ENCODE measurements at regions of chr11 and their contacts with region 1.

Region 1: GRCh38 chr11:28107748-28108618 is at the starts of genes KIF18A and METTL15:
- DNase-seq: peak; percentile 98 to 99
- ATAC-seq: peak; percentile 94 to 97
- H3K4me3 ChIP-seq: peak within 1 kb of the TSS; percentile 66 to 89 (median 79)
- H3K27ac ChIP-seq: peak within 1 kb of the TSS; percentile 79 to 90 (median 82)
- H3K4me1 ChIP-seq: peaks cover 19 to 34% of the 10 kb centered on the region in 2 donors
- H3K27me3 ChIP-seq: no peaks in the 10 kb centered on the region
- CTCF ChIP-seq: no peak
- POLR2A ChIP-seq: peak; percentile 38 to 56
- total RNA-seq, gene KIF18A: 0.10 to 0.41 (median 0.10) TPM
- total RNA-seq, gene METTL15: 4.5 to 15.5 (median 6.7) TPM

Region 2: DNA sequence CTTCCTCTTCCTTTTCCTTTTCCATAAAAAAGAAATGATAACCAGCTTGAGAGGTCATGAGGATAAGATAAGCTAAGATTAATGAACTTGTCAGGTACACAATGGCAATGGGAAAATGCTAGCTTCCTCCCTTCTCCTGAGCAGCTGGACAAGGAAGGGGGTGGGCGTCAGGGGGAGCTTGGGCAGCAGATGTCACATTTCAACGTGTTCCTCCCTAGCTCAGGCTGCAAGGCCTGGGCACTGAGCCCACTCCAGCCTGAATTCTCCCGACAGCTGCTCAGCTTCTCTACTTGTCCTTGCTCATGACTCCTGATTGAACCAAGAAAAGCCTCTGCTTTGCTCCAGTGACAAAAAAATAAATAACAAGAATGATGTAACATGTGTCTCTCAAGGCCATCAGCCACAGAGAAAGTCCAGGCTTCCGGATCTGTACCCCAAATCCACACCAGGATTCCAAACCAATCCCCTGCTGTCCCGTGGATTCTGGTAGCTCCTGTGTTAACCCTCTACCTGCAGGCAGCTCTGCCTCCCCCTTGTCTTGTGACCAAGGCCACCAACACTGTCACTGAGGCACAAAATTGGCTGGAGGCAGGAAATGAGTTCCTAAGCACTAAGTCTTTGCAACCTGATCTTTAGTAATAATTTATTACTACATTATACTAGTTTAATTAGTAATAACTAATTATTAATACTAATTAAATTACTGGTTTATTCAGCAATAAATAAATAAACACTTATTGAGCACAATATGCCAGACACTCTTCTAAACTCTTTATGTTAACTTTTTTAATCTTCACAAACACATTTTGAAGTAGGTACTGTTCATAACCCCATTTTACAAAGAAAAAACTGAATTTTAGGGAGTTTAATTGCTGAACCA is 891.5 kb before region 1 on chr11:
- in situ Hi-C with region 1: no loop called
- intact Hi-C with region 1: loop called (anchors 5 kb)
- DNase-seq: peak; percentile 42 to 50
- ATAC-seq: peak; percentile 76 to 78
- H3K4me3 ChIP-seq: peak overlapping the region in 1 of 4 donors; percentile 11
- H3K27ac ChIP-seq: peak overlapping the region; percentile 68 to 80 (median 70)
- H3K4me1 ChIP-seq: peaks cover 51 to 54% of the 10 kb centered on the region in 2 donors
- H3K27me3 ChIP-seq: no peaks in the 10 kb centered on the region
- CTCF ChIP-seq: no peak
- POLR2A ChIP-seq: no peak

Region 3: GRCh38 chr11:27506200-27507182 is 601.5 kb before region 1 on chr11 and contains the start of gene LIN7C:
- in situ Hi-C with region 1: loop called in 1 of 4 experiments (anchors 25 kb)
- intact Hi-C with region 1: loop called (anchors 1 kb)
- DNase-seq: peak; percentile 95 to 96
- ATAC-seq: peak; percentile 99
- H3K4me3 ChIP-seq: peak within 1 kb of the TSS; percentile 84 to 99 (median 94)
- H3K27ac ChIP-seq: peak within 1 kb of the TSS; percentile 93 to 97 (median 94)
- H3K4me1 ChIP-seq: peaks cover 32% of the 10 kb centered on the region in 2 donors
- H3K27me3 ChIP-seq: no peaks in the 10 kb centered on the region
- CTCF ChIP-seq: no peak
- POLR2A ChIP-seq: peak; percentile 87 to 88
- total RNA-seq, gene LIN7C: 10.6 to 22.8 (median 13.8) TPM

Measured in gastrocnemius medialis (tissue), 4 donors.